Right ventricle myocardium inferior (tissue), 1 donor: ENCODE measurements at regions of chr3 and their contacts with region 1.

Region 1: DNA sequence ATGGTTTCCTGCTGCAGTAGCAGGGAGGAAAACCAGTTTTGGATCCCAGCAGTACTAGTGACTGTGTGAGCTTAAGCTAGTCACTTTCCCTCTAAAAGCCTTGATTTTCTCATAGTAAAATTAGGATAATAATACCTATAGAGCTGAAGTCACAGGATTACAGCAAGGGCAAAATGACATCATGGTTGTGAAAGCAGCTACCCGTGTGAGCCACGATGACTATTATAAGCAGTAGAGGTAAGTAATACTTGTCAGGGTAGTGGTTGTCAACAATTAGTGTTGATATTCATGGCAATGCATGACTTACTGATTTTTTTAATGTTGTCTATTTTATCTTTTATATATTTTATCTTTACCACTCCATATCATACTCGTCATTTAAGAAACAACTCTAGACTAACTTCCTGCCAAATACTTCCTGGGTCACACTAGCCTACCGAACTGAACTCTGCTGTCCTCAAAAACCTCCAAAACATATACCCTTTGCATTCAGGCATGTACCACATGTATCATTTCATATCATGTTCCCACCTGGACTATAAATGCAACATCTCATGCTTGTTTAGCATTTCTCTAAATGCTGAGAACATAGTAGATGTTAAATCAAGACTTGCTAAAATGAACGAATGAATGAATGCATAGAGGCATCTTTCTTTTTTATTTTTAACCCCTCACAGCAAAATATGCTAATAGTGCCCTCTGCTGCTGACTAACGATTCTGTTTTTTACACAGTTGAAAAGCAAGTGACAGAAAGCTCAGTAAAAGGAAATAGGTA is 172.6 kb downstream of the P3H2 start:
- DNase-seq: no peak
- ATAC-seq: no peak

Region 2: DNA sequence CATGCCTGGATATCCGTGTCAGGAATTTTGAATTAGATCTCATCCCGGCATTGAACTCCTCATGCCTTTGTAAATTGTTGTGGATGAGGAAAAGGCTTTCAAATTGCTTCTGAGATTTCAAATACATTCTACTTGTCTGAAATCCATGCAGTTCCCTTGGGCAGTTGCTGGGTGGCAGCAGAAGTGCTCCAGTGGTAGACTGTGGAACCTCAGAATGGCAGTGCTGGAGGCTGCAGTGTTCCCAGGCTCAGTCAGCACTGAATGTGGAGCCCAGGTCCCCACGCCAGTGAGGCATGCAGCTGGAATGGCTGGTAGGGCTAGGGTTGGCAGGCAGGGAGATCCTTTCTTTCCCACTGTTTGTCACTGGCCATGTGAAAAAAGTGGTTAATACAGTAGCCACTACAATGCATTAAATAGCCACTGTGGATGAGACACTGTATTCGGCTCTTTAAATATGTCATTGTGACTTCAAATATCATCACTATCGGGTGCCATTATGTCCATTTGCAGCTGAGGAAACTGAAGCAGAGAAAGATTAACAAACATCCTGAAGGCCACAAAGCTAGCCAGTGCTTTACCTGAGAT is 677.8 kb before region 1 on chr3:
- intact Hi-C with region 1: loop called (anchors 2 kb)
- DNase-seq: peak; percentile 57
- ATAC-seq: peak; percentile 46

Region 3: GRCh38 chr3:189981668-189982067 is 33.5 kb after region 1 on chr3:
- intact Hi-C with region 1: no loop called
- DNase-seq: no peak
- ATAC-seq: peak; percentile 86